Pancreas (tissue), 10 donors: ENCODE measurements at regions of chrX and their contacts with region 1.

Region 1: GRCh38 chrX:18899796-18900447 is 84.0 kb downstream of the PHKA2 start:
- DNase-seq: no peak
- ATAC-seq: peak in 3 of 4 donors; percentile 27 to 43 (median 41)
- H3K4me3 ChIP-seq: no peak overlapping the region
- H3K27ac ChIP-seq: no peak overlapping the region
- H3K4me1 ChIP-seq: no peaks in the 10 kb centered on the region
- H3K27me3 ChIP-seq: no peaks in the 10 kb centered on the region
- CTCF ChIP-seq: no peak

Region 2: DNA sequence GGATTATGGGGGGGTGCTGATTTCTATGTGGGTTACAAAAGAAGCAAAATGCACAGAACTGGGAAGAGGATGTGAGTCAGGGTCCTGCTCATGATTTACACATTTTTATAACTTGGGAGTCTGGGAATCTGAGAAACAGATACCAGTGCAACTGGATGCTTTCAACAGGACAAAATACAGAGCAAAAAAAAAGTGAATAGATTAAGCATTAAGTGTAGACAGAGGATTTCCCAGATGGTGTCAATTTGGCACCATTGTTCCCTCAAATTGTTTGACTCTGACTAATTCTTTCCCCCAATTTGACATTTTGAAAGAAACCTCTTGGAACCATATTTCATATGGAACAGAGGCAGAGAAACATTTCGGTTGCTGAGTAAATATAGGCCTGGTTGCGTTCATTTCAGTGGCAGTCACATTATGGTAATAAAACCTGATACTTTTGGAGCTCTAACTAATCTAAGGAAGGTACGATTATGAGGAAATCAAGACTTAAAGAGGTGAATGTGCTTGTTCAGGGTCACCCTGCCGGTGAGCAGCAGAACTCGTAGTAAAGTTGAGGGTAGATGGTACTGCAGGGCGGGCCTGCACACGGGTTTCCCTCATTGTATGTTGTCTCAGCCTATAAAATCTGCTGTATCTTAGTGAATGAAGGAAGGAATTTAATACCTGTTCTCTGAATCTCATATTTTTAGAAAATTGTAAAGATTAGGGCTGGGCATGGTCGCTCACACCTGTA is 493.2 kb before region 1 on chrX:
- intact Hi-C with region 1: loop called in 1 of 3 experiments (anchors 10 kb)
- DNase-seq: no peak
- ATAC-seq: no peak
- H3K4me3 ChIP-seq: no peak overlapping the region
- H3K27ac ChIP-seq: no peak overlapping the region
- H3K4me1 ChIP-seq: no peaks in the 10 kb centered on the region
- H3K27me3 ChIP-seq: no peaks in the 10 kb centered on the region
- CTCF ChIP-seq: no peak

Region 3: GRCh38 chrX:19245711-19246269 is 345.9 kb after region 1 on chrX:
- intact Hi-C with region 1: no loop called
- DNase-seq: no peak
- ATAC-seq: no peak
- H3K4me3 ChIP-seq: no peak overlapping the region
- H3K27ac ChIP-seq: no peak overlapping the region
- H3K4me1 ChIP-seq: no peaks in the 10 kb centered on the region
- H3K27me3 ChIP-seq: no peaks in the 10 kb centered on the region
- CTCF ChIP-seq: no peak